CD4-positive, alpha-beta T cell (primary cell): ENCODE measurements at regions of chr17 and their contacts with region 1.

Region 1: DNA sequence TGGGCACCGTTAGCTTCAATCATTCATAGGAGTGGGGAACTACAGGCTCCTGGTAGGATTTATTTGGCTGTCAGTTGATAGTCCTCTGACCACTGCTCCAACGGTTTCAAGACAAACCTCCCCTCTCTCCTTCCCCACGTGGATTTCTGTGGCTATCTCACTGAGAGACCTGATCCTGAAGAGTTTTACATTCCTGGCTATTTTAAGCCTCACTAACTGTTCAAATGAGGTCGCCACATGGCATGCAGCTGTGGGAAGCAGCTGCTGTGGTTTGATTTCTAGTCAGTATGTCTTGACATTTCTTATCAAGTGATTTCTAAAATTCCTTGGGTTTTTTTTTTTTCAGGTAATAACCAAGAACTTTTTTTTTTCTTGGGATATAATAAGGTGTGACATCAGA is 38.3 kb downstream of the CDK5R1 start:
- DNase-seq: no peak
- ATAC-seq: no peak
- H3K4me3 ChIP-seq: no peak overlapping the region
- H3K4me3 Mint-ChIP-seq: no peak overlapping the region
- H3K27ac ChIP-seq: no peak overlapping the region
- H3K27ac Mint-ChIP-seq: no peak overlapping the region
- H3K4me1 ChIP-seq: peaks cover 44% of the 10 kb centered on the region
- H3K4me1 Mint-ChIP-seq: peaks cover 53% of the 10 kb centered on the region
- H3K27me3 ChIP-seq: no peaks in the 10 kb centered on the region
- H3K27me3 Mint-ChIP-seq: no peaks in the 10 kb centered on the region
- CTCF ChIP-seq: no peak

Region 2: GRCh38 chr17:31696184-31696602 is 828.9 kb before region 1 on chr17:
- CTCF ChIA-PET with region 1: no interaction called
- POLR2A ChIA-PET with region 1: no interaction called
- intact Hi-C with region 1: no loop called
- DNase-seq: no peak
- ATAC-seq: no peak
- H3K4me3 ChIP-seq: no peak overlapping the region
- H3K4me3 Mint-ChIP-seq: no peak overlapping the region
- H3K27ac ChIP-seq: no peak overlapping the region
- H3K27ac Mint-ChIP-seq: no peak overlapping the region
- H3K4me1 ChIP-seq: no peaks in the 10 kb centered on the region
- H3K4me1 Mint-ChIP-seq: no peaks in the 10 kb centered on the region
- H3K27me3 ChIP-seq: peaks cover 0 to 5% of the 10 kb centered on the region in 2 experiments
- H3K27me3 Mint-ChIP-seq: peaks cover 9% of the 10 kb centered on the region
- CTCF ChIP-seq: no peak

Region 3: DNA sequence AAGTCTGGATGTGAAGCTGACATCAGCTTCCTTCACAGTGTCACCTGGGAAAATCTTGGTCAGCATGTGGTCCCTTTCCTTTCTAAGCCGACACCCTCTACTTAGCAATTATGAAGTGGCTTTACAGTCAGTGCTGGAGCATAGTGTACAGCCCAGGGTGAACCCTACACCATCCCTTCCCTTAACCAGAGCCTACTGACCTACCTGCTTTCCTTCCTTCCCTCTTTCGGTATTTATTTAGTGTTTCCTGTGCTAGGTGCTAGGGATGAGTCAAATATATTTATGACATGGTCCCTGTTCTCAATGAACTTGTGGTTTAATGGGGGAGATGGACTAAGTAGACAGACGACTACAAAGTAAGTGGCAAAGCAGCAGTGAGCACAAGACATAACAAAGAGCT is 39.2 kb after region 1 on chr17:
- CTCF ChIA-PET with region 1: interaction called, 3 read pairs
- POLR2A ChIA-PET with region 1: no interaction called
- intact Hi-C with region 1: loop called in 1 of 2 experiments (anchors 5 kb)
- DNase-seq: no peak
- ATAC-seq: no peak
- H3K4me3 ChIP-seq: no peak overlapping the region
- H3K4me3 Mint-ChIP-seq: no peak overlapping the region
- H3K27ac ChIP-seq: no peak overlapping the region
- H3K27ac Mint-ChIP-seq: no peak overlapping the region
- H3K4me1 ChIP-seq: no peaks in the 10 kb centered on the region
- H3K4me1 Mint-ChIP-seq: peaks cover 2% of the 10 kb centered on the region
- H3K27me3 ChIP-seq: no peaks in the 10 kb centered on the region
- H3K27me3 Mint-ChIP-seq: no peaks in the 10 kb centered on the region
- CTCF ChIP-seq: no peak

Region 4: GRCh38 chr17:32609085-32609484 is 84.0 kb after region 1 on chr17:
- CTCF ChIA-PET with region 1: interaction called, 3 read pairs
- POLR2A ChIA-PET with region 1: no interaction called
- intact Hi-C with region 1: loop called in 1 of 2 experiments (anchors 5 kb)
- DNase-seq: peak; percentile 58 to 85 (median 70)
- ATAC-seq: peak; percentile 100
- H3K4me3 ChIP-seq: no peak overlapping the region
- H3K4me3 Mint-ChIP-seq: no peak overlapping the region
- H3K27ac ChIP-seq: no peak overlapping the region
- H3K27ac Mint-ChIP-seq: no peak overlapping the region
- H3K4me1 ChIP-seq: no peaks in the 10 kb centered on the region
- H3K4me1 Mint-ChIP-seq: peaks cover 6% of the 10 kb centered on the region
- H3K27me3 ChIP-seq: no peaks in the 10 kb centered on the region
- H3K27me3 Mint-ChIP-seq: no peaks in the 10 kb centered on the region
- CTCF ChIP-seq: peak; percentile 83